ENCODE measurements at regions of chr21 and their contacts with region 1.

Region 1: GRCh38 chr21:23016405-23017016 is 2018.3 kb downstream of the NCAM2 start:
- DNase-seq: no peak
- H3K4me3 ChIP-seq: no peak overlapping the region
- H3K27ac ChIP-seq: no peak overlapping the region
- H3K4me1 ChIP-seq: no peaks in the 10 kb centered on the region
- CTCF ChIP-seq: peak; percentile 31; the same call in 1 of the 2 replicates

Region 2: DNA sequence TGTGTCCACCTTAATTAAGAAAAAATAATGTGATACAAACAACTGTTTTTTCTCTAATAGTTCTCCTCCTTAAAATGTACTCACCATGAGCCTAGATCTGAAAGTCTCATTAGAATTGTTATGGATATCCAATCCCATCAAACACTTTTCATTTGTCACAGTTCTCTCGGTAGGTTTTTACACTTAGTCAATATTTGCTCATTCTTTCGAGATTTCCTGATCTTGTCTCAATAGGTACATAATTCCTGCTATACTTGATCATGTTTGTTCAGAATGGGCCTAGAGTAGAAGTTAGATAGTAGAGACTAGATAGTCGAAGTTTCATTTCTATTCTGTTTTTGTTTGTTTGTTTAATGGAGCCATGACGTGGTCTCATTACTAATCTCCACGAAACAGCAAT is 12.6 kb before region 1 on chr21:
- CTCF ChIA-PET with region 1: no interaction called
- POLR2A ChIA-PET with region 1: interaction called, 10 read pairs
- intact Hi-C with region 1: no loop called
- DNase-seq: no peak
- H3K4me3 ChIP-seq: no peak overlapping the region
- H3K27ac ChIP-seq: no peak overlapping the region
- H3K4me1 ChIP-seq: no peaks in the 10 kb centered on the region
- CTCF ChIP-seq: no peak